A549 (cell line): ENCODE measurements at regions of chr1 and their contacts with region 1.

Region 1: DNA sequence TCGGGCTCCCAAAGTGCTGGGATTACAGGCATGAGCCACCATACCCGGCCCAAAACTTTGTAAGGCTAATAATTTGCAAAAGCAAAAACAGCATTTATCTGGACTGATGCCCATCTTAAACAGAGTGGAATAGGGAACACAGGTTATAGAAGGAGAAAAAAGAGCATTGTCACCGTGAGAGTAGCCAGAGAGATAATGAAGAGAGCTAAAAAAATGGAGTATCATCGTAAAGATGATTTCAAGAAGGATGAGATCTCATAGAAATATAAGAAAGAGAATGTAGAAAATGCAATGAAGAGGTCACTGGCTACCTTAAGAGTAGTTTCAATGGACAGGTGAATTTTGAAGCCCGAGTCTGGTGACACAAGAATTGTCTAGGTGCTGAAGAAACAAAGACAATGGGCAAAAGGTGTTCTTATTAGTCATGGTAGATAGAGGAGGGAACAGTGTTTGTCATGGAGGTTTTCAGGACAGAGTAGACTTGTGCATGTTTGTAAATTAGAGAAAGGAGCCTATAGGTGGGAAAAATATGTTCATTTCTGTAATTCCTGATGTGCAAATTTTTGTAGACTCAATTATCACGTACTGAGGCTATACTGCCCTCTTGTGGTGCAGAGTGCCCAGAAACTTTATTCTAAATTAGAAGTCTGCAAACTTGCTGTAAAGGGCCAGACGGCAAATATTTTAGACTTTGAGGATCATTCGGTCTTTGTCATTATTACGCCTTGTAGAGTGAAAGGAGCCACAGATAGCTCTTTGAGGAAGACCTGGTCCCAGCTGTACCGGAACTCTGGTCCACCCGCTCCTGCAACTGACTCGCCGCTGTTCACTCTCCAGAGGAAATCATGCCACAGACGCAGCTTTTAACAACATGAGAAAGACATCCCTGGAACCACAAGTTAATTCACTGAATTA is 8.1 kb upstream of the TMEM183A start:
- DNase-seq: peak; percentile 25 to 60
- ATAC-seq: peak; percentile 34 to 71; a peak in 3 of 6 replicates
- H3K4me3 ChIP-seq: no peak overlapping the region
- H3K27ac ChIP-seq: peak overlapping the region in 1 of 2 experiments; percentile 9; a peak in 1 of 6 replicates
- H3K4me1 ChIP-seq: no peaks in the 10 kb centered on the region
- CTCF ChIP-seq: peak; percentile 93
- EP300 ChIP-seq: no peak
- POLR2A ChIP-seq: no peak
- RAD21 ChIP-seq: peak; percentile 80 to 83

Region 2: DNA sequence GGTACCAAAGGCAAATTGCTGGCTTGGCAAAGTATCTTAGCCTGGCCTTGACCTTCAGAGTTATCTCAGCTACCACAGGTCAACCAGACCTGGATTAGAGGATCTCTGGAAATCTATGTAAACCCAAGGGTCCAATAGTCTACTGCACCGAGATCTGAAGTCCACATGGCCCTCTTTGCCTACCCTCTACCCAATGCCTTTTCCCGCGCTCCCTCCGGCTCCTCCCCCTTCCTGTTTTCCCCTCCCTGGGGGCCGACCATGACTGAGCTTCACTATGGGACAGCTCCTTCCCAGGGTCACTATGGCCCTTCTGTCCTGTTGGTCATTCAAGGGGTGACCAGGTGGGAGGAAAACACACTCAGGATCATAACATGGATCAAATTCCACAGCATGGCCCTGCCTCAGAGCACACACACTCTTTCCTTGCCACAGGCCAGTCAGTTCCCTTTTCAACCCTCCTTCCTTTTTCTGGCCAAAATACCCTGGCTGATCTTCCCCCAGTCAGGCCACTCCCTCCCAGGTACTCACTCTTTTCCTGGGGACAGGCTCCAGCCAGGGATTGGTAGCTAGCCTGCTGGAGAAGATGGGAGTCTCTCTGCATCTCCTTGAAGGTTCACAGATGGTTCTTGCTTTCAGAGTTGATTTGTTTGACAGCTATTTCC is 11.0 kb before region 1 on chr1:
- CTCF ChIA-PET with region 1: interaction called, 28 read pairs
- POLR2A ChIA-PET with region 1: no interaction called
- DNase-seq: no peak
- ATAC-seq: no peak; a peak in 1 of 6 replicates
- H3K4me3 ChIP-seq: no peak overlapping the region
- H3K27ac ChIP-seq: no peak overlapping the region
- H3K4me1 ChIP-seq: no peaks in the 10 kb centered on the region
- CTCF ChIP-seq: no peak
- EP300 ChIP-seq: no peak
- POLR2A ChIP-seq: no peak
- RAD21 ChIP-seq: no peak